ENCODE measurements at regions of chr16 and their contacts with region 1.

Region 1: GRCh38 chr16:77675464-77676324 is 46.6 kb upstream of the NUDT7 start:
- DNase-seq: no peak

Region 2: GRCh38 chr16:77599793-77600415 is 75.8 kb before region 1 on chr16:
- intact Hi-C with region 1: no loop called
- DNase-seq: no peak

Region 3: GRCh38 chr16:77736879-77737278 is 61.2 kb after region 1 on chr16:
- intact Hi-C with region 1: no loop called
- DNase-seq: no peak

Region 4: DNA sequence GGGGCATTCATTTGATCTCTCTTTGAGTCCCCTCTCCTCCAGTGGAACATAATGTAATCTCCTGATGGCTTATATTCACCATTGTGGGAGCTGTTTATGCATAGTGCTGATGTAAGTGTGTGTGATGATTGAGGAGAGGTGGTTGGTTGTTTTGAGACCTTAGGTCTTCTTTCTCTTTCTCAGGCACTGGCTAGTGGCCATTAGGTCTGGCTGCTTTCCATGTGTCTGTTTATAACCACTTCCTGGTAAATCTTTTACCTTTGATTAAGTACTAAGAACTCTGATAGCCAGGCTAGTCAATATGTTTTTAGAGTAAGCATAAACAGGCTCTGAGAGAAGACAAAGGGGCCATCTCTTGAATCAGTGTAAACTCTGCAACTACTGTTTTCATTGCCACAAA is 140.6 kb after region 1 on chr16:
- intact Hi-C with region 1: no loop called
- DNase-seq: no peak

Region 5: DNA sequence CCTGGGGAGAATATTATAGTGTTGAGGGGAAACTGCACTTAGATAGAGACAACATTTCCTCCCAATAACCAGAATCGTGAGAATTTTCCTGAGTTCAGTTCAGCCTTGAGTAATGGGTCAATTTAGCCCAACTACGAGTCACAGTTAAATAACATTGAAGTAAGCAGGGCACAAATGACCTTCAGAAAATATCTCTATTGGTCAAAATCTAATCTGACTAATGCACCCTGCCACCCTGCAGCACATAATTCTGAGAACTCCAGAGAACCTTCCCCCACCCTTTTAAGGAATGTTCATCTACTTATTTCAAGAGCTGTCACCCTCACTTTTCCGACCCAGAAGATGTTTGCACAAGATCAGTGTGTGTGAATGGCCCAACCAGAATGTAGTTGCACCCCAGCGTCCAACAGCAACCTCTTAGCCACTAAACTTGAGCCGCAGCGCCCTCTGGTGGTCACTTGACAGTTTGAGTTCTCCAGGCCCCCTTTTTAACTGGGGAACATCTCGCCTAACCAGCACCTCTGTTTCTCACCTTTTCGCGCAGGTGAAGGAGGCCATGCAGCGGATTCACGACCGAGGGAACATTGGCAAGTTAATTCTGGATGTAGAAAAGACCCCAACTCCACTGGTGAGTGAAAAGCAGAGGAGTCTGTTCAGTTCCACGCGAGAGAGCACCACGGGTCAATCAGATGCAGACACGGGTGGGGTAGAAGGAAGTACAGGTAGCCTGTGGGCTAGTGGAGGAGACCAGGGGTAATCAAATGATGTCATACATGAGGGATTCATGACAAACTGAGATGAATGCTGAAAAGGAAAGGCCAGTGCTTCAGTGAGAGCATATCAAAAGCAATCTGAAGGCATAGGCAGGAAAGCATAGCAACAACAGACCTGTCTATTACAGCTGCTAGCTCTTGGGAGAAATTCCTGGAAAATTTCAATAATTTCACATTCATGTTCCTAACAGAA is 295.9 kb after region 1 on chr16:
- intact Hi-C with region 1: loop called (anchors 5 kb)
- DNase-seq: peak; percentile 93

Region 6: DNA sequence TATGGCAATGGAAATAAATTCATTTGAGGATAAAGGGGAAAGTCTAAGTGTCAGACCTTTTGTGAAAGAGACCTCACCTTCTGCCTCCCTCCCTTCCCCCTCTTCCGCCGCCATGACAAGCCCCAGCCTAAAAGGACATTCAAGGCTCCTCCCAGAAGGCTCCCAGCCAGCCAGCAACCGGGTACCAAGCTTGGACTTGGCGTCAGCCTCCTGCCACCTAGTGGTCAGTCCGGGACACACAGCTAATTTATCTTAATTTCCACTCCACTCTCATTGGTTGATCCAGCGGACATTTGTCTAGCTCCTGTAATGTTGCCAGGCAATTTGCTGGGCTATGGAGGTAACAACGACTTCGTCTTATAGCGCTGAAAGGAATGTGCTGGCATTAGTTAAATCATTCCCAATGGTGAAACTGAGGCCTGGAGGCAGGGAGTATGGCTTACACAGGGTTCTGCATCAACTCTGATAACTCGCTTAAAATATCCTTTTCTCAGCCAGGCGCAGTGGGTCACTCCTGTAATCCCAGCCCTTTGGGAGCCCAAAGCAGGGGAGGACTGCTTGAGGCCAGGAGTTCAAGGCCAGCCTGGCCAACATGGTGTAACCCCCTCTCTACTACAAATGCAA is 327.3 kb after region 1 on chr16:
- intact Hi-C with region 1: loop called in 1 of 2 experiments (anchors 10 kb)
- DNase-seq: peak; percentile 94

Region 7: DNA sequence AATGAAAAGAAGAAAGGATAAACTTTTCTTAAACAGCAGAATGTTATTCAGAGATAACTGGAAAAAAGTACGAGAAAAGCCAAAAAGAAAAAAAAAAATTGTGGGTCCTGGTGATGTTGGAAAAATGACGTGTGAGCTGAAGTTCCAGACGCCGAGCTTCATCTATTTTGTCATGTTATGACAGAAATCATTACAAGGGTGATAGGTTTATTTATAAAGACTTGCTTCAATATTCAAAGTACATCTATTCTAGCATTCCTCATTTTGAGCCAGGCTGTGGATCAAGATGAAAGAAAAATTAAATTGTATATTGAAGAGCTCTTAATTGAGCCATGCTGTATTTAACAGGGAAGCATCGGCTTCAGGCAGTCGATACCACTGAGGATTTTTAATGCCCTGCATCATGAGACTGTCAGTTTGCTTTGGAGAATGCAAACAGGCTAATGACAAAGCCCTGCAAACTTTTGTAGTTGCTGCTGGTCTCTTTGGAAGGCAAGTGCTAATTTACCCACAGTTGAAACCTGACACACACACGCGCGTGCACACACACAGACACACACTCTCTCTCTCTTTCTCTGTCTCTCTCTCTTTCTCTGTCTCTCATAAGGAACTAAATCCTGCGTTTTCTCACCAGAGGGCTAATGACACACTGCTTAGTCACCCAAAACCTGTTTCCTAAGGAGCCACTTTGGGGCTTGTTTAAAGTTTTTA is 534.4 kb after region 1 on chr16:
- intact Hi-C with region 1: loop called in 1 of 2 experiments (anchors 10 kb)
- DNase-seq: no peak

Measured in posterior vena cava (tissue), 2 donors.